ENCODE measurements at regions of chrX and their contacts with region 1.

Region 1: DNA sequence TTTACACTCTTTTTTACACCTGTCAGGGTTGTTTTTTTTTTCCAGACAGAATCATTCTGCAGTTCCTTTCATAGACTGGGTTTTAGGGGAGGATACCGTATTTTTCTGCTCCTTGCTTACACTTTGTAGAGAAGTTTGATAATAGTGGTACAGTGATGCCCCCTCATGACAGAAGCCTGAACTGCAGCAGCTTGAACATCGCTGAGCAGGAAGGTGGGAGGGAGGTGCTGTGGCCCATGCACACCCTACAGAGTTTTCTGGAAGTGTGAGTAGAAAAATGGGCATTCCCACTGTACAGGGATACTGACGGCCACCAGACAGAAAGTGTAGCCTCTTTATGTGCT is 54.5 kb downstream of the RAB40A start:
- DNase-seq: peak; percentile 74 to 88
- H3K4me3 ChIP-seq: no peak overlapping the region
- H3K4me1 ChIP-seq: peaks cover 6% of the 10 kb centered on the region; the same call in 1 of the 2 replicates
- H3K27me3 ChIP-seq: no peaks in the 10 kb centered on the region

Region 2: GRCh38 chrX:102950908-102951866 is 513.6 kb before region 1 on chrX:
- in situ Hi-C with region 1: loop called (anchors 25 kb)
- DNase-seq: peak; percentile 74 to 85
- H3K4me3 ChIP-seq: peak overlapping the region; percentile 13
- H3K4me1 ChIP-seq: peaks cover 8% of the 10 kb centered on the region
- H3K27me3 ChIP-seq: no peaks in the 10 kb centered on the region

Region 3: GRCh38 chrX:103214870-103215424 is 249.8 kb before region 1 on chrX and contains the start of gene BEX4:
- in situ Hi-C with region 1: loop called (anchors 10 kb)
- DNase-seq: peak; percentile 80 to 95
- H3K4me3 ChIP-seq: peak within 1 kb of the TSS; percentile 82
- H3K4me1 ChIP-seq: peaks cover 3% of the 10 kb centered on the region
- H3K27me3 ChIP-seq: no peaks in the 10 kb centered on the region

Region 4: GRCh38 chrX:103343105-103343504 is 121.6 kb before region 1 on chrX:
- in situ Hi-C with region 1: loop called (anchors 10 kb)
- DNase-seq: peak; percentile 39 to 64
- H3K4me3 ChIP-seq: no peak overlapping the region
- H3K4me1 ChIP-seq: no peaks in the 10 kb centered on the region
- H3K27me3 ChIP-seq: peaks cover 7% of the 10 kb centered on the region

Region 5: DNA sequence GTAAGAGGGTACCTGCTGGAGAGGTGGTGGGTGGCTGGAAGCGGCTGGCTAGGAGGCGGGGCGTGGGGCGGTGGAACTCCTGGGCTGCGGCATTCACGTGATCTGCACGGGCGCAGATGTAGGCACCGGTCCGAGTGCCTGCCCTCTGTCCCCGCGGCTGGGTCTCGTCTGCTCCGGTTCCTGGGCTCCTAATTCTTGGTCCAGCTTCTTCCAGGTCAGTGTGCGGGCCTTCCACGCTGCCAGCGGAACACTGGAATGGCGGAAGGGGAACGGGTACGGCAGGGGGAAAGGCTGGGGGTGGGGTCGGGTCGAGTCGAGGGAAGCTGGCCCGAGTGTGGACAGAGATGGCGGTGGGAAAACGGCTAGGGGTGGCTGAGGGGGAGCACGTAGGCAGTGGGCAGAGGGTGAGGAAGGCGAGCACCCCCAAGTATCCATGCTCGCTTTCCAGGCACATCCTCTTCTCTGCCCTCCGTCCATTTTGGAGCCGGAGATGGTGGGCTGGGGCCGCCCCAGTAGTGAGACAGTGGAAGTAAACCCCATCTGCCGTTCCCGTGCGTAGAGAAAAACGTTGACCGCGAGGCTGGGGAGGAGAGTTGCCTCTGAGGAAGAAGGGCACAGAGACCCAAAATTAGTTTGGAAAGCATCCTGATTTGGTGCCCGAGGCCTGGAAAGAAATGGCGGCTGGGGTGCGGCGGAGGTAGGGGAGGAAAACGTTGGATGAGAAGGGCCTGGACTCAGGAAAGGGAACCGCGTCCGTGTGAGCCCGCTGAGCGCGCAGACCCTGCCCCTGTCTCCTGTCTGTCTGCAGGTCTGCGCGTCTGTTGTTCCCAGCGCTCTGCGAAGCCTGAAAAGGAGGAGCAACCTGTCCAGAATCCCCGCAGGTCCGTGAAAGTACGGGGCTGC is 120.9 kb after region 1 on chrX and contains the start of gene TCEAL4:
- in situ Hi-C with region 1: no loop called
- DNase-seq: peak; percentile 37 to 83
- H3K4me3 ChIP-seq: peak within 1 kb of the TSS; percentile 71
- H3K4me1 ChIP-seq: peaks cover 5% of the 10 kb centered on the region
- H3K27me3 ChIP-seq: 0 out of 2 replicates have a peak, but pooled peaks cover 6% of the 10 kb centered on the region